HEK293T (cell line): ENCODE measurements at regions of chr4 and their contacts with region 1.

Region 1: GRCh38 chr4:185597532-185598188 is 62.4 kb upstream of the PDLIM3 start:
- DNase-seq: peak; percentile 60

Region 2: GRCh38 chr4:185587427-185588161 is 10.1 kb before region 1 on chr4:
- CTCF ChIA-PET with region 1: interaction called, 21 read pairs
- POLR2A ChIA-PET with region 1: no interaction called
- DNase-seq: no peak